ENCODE measurements at regions of chr3 and their contacts with region 1.

Region 1: GRCh38 chr3:195271116-195271858 is at the start of gene XXYLT1:
- DNase-seq: peak; percentile 94
- ATAC-seq: peak; percentile 86
- H3K4me3 Mint-ChIP-seq: peak within 1 kb of the TSS; percentile 83
- H3K27ac Mint-ChIP-seq: peak within 1 kb of the TSS; percentile 86
- H3K4me1 Mint-ChIP-seq: peaks cover 32% of the 10 kb centered on the region
- H3K27me3 Mint-ChIP-seq: no peaks in the 10 kb centered on the region
- total RNA-seq, gene XXYLT1: 10.8 to 13.3 TPM

Region 2: GRCh38 chr3:194671900-194672808 is 599.1 kb before region 1 on chr3 and contains the start of gene LSG1:
- CTCF ChIA-PET with region 1: interaction called, 37 read pairs
- POLR2A ChIA-PET with region 1: interaction called, 3 read pairs
- DNase-seq: peak; percentile 94
- ATAC-seq: peak; percentile 93
- H3K4me3 Mint-ChIP-seq: peak within 1 kb of the TSS; percentile 97
- H3K27ac Mint-ChIP-seq: peak within 1 kb of the TSS; percentile 97
- H3K4me1 Mint-ChIP-seq: peaks cover 27% of the 10 kb centered on the region
- H3K27me3 Mint-ChIP-seq: no peaks in the 10 kb centered on the region
- total RNA-seq, gene LSG1: 46.9 to 48.0 TPM

Region 3: DNA sequence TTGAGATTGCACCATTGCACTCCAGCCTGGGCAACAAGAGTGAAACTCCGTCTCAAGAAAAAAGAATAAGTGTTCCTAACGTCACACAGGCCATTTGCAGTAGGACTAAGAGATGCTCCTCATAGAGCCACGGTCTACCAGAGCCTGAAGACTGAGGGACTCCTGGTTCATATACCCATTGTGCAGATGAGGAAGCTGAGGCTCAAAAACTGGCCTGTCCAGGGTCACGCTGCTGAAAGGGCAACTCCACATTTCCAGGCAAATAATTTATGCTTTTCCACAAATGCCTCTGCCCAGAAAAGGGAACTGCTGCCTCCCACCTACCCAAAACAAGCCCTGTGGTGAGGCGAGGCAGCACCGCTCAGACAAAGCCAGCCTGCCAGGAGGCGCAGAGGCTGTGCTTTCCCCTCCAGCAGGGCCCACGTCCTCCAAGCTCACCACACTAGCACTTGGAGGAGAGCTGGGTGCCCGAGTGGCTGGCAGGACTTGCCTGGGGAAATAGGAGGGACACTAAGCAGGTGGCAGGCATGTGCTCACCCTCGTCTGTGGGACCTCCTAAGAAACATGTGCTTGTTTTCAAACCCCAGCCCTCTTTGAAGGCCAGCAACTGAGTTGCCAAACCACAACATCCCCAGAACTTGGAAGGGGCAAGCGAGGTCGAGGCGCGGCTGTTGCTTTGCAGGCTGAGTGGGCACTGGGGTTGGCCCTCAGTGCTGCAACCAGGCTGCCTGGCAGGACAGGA is 195.9 kb before region 1 on chr3:
- CTCF ChIA-PET with region 1: no interaction called
- POLR2A ChIA-PET with region 1: no interaction called
- DNase-seq: no peak
- ATAC-seq: no peak
- H3K4me3 Mint-ChIP-seq: no peak overlapping the region
- H3K27ac Mint-ChIP-seq: no peak overlapping the region
- H3K4me1 Mint-ChIP-seq: peaks cover 6% of the 10 kb centered on the region
- H3K27me3 Mint-ChIP-seq: no peaks in the 10 kb centered on the region

Region 4: GRCh38 chr3:195139091-195139839 is 132.0 kb before region 1 on chr3:
- CTCF ChIA-PET with region 1: no interaction called
- POLR2A ChIA-PET with region 1: no interaction called
- DNase-seq: no peak
- ATAC-seq: no peak
- H3K4me3 Mint-ChIP-seq: no peak overlapping the region
- H3K27ac Mint-ChIP-seq: no peak overlapping the region
- H3K4me1 Mint-ChIP-seq: no peaks in the 10 kb centered on the region
- H3K27me3 Mint-ChIP-seq: no peaks in the 10 kb centered on the region

Region 5: GRCh38 chr3:195286115-195286872 is 15.0 kb after region 1 on chr3:
- CTCF ChIA-PET with region 1: interaction called, 48 read pairs
- POLR2A ChIA-PET with region 1: no interaction called
- DNase-seq: no peak
- ATAC-seq: no peak
- H3K4me3 Mint-ChIP-seq: no peak overlapping the region
- H3K27ac Mint-ChIP-seq: no peak overlapping the region
- H3K4me1 Mint-ChIP-seq: no peaks in the 10 kb centered on the region
- H3K27me3 Mint-ChIP-seq: no peaks in the 10 kb centered on the region

Region 6: GRCh38 chr3:195442573-195443390 is 171.5 kb after region 1 on chr3 and contains the start of gene ACAP2:
- CTCF ChIA-PET with region 1: interaction called, 52 read pairs
- POLR2A ChIA-PET with region 1: interaction called, 4 read pairs
- DNase-seq: peak; percentile 99
- ATAC-seq: peak; percentile 92
- H3K4me3 Mint-ChIP-seq: peak within 1 kb of the TSS; percentile 94
- H3K27ac Mint-ChIP-seq: peak within 1 kb of the TSS; percentile 92
- H3K4me1 Mint-ChIP-seq: peaks cover 45% of the 10 kb centered on the region
- H3K27me3 Mint-ChIP-seq: no peaks in the 10 kb centered on the region
- total RNA-seq, gene ACAP2: 69.7 to 74.2 TPM

Region 7: DNA sequence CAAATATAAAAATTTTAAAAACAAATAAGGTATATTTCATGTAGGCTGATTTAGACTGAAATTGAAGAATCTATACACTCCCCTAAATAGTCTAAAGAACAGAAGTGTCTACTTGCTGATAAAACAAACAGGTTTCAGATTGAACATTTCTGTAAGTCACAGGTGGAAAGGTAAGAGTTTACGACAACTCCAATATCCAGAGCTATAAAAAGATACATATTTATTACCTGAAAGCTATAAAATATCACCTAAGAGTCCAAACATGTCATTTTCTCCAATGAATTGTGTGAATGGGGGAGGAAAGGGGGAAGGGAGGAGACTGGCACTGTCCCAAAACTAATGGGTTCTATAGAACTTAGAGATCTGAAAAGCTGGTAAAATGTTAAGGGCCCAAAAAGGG is 245.7 kb after region 1 on chr3:
- CTCF ChIA-PET with region 1: interaction called, 258 read pairs
- POLR2A ChIA-PET with region 1: no interaction called
- DNase-seq: no peak
- ATAC-seq: no peak
- H3K4me3 Mint-ChIP-seq: no peak overlapping the region
- H3K27ac Mint-ChIP-seq: no peak overlapping the region
- H3K4me1 Mint-ChIP-seq: peaks cover 3% of the 10 kb centered on the region
- H3K27me3 Mint-ChIP-seq: no peaks in the 10 kb centered on the region

Region 8: GRCh38 chr3:195542698-195543499 is 271.6 kb after region 1 on chr3 and contains the start of gene PPP1R2:
- CTCF ChIA-PET with region 1: interaction called, 69 read pairs
- POLR2A ChIA-PET with region 1: interaction called, 7 read pairs
- DNase-seq: peak; percentile 93
- ATAC-seq: peak; percentile 82
- H3K4me3 Mint-ChIP-seq: peak within 1 kb of the TSS; percentile 92
- H3K27ac Mint-ChIP-seq: peak within 1 kb of the TSS; percentile 89
- H3K4me1 Mint-ChIP-seq: peaks cover 75% of the 10 kb centered on the region
- H3K27me3 Mint-ChIP-seq: no peaks in the 10 kb centered on the region
- total RNA-seq, gene PPP1R2: 72.0 to 72.6 TPM